RWPE1 (cell line): ENCODE measurements at regions of chr7 and their contacts with region 1.

Region 1: GRCh38 chr7:74570533-74571156 is 86.9 kb upstream of the GTF2I start:
- DNase-seq: no peak
- H3K27ac ChIP-seq: peak overlapping the region; percentile 93
- CTCF ChIP-seq: no peak

Region 2: GRCh38 chr7:74496272-74496671 is 74.4 kb before region 1 on chr7:
- CTCF ChIA-PET with region 1: no interaction called
- POLR2A ChIA-PET with region 1: no interaction called
- DNase-seq: no peak
- H3K27ac ChIP-seq: peak overlapping the region; percentile 61
- CTCF ChIP-seq: no peak

Region 3: DNA sequence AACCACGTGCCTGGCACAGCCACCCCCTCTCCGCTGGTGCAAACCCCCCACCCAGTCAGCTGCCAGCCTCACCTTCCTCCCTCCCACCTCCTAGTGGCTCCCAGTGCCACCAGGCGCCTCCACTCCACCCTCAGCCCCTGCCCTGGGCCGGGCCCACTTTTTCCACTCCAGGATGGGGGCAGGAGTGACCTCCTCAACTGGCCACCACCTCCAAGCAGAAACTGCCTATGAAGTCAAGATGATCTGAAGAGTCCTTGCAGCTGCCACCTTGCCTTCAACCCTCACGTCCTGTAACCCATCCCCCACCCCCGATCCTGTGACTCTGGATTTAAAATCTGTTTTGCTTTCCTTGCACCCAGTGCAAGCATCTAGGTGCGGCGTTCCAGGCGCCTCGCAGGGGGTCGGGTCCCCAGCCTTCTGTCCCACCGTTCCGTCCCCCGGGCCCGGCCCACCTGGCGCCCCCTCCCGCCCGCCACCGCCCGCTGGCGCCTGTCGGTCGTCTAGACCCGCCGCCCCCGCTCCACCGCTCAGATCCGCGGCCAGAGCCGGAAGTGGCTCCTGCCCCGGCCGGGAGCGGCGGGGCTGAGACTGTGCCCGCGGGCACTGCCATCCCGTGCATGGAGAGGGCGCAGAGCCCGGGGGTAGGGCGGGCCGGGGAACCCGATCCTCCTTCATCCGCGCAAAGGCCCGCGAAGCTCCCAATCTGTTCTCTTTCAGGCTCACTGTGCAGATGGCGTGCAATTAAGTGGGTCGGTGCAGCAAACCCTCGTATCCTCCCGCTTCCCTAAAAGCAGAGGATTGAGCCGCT is 35.7 kb after region 1 on chr7:
- CTCF ChIA-PET with region 1: no interaction called
- POLR2A ChIA-PET with region 1: interaction called, 12 read pairs
- DNase-seq: no peak
- H3K27ac ChIP-seq: peak overlapping the region; percentile 74
- CTCF ChIP-seq: no peak